CD4-positive, alpha-beta T cell (primary cell): ENCODE measurements at regions of chr10 and their contacts with region 1.

Region 1: GRCh38 chr10:104005172-104005863 is 38.4 kb downstream of the SLK start:
- DNase-seq: no peak
- ATAC-seq: no peak
- H3K4me3 ChIP-seq: no peak overlapping the region
- H3K4me3 Mint-ChIP-seq: no peak overlapping the region
- H3K27ac ChIP-seq: no peak overlapping the region
- H3K27ac Mint-ChIP-seq: no peak overlapping the region
- H3K4me1 ChIP-seq: no peaks in the 10 kb centered on the region
- H3K4me1 Mint-ChIP-seq: peaks cover 4% of the 10 kb centered on the region
- H3K27me3 ChIP-seq: no peaks in the 10 kb centered on the region
- H3K27me3 Mint-ChIP-seq: no peaks in the 10 kb centered on the region
- CTCF ChIP-seq: no peak

Region 2: GRCh38 chr10:103995134-103995533 is 10.2 kb before region 1 on chr10:
- CTCF ChIA-PET with region 1: no interaction called
- POLR2A ChIA-PET with region 1: interaction called, 3 read pairs
- intact Hi-C with region 1: loop called in 1 of 2 experiments (anchors 1 kb)
- DNase-seq: no peak
- ATAC-seq: no peak
- H3K4me3 ChIP-seq: no peak overlapping the region
- H3K4me3 Mint-ChIP-seq: no peak overlapping the region
- H3K27ac ChIP-seq: no peak overlapping the region
- H3K27ac Mint-ChIP-seq: no peak overlapping the region
- H3K4me1 ChIP-seq: no peaks in the 10 kb centered on the region
- H3K4me1 Mint-ChIP-seq: peaks cover 24% of the 10 kb centered on the region
- H3K27me3 ChIP-seq: no peaks in the 10 kb centered on the region
- H3K27me3 Mint-ChIP-seq: no peaks in the 10 kb centered on the region
- CTCF ChIP-seq: no peak

Region 3: DNA sequence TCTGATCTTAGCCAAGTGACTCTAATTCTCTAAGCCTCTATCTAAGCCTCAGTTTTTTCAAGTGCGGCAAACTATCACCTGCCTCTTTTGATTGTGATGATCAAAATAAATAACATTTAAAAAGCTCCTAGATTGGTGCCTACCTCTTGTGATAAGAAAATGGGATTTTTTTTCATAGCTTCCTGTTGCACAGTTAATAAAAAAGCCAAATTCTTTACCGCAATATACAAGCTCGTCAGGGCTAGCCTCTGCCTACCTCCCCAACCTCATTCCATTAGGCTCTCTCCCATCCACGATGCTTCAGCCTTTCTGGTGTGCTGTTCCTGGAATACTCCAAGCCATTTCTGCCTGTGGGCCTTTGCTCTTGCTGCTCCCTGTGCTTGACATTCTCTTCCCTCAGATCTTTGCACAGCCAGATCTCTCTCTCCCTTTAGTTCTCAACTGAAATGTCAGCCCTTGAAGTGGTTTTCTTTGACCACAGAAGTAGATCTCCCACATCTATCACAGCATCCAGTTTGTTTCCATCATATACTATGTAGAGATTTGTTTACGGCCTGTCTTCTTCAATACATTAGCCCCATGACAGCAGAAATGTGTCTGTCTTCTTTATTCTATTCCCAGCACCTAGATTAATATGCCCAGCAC is 165.4 kb after region 1 on chr10:
- CTCF ChIA-PET with region 1: no interaction called
- POLR2A ChIA-PET with region 1: no interaction called
- intact Hi-C with region 1: no loop called
- DNase-seq: peak in 6 of 14 experiments; percentile 1 to 78 (median 40)
- ATAC-seq: peak; percentile 93
- H3K4me3 ChIP-seq: no peak overlapping the region
- H3K4me3 Mint-ChIP-seq: peak overlapping the region; percentile 5
- H3K27ac ChIP-seq: no peak overlapping the region
- H3K27ac Mint-ChIP-seq: peak overlapping the region; percentile 1
- H3K4me1 ChIP-seq: peaks cover 12% of the 10 kb centered on the region
- H3K4me1 Mint-ChIP-seq: peaks cover 25% of the 10 kb centered on the region
- H3K27me3 ChIP-seq: no peaks in the 10 kb centered on the region
- H3K27me3 Mint-ChIP-seq: peaks cover 5% of the 10 kb centered on the region
- CTCF ChIP-seq: no peak